Activated CD8-positive, alpha-beta T cell treated with anti-CD3 and anti-CD28 coated beads for 36 hours (primary cell): ENCODE measurements at regions of chr2 and their contacts with region 1.

Region 1: DNA sequence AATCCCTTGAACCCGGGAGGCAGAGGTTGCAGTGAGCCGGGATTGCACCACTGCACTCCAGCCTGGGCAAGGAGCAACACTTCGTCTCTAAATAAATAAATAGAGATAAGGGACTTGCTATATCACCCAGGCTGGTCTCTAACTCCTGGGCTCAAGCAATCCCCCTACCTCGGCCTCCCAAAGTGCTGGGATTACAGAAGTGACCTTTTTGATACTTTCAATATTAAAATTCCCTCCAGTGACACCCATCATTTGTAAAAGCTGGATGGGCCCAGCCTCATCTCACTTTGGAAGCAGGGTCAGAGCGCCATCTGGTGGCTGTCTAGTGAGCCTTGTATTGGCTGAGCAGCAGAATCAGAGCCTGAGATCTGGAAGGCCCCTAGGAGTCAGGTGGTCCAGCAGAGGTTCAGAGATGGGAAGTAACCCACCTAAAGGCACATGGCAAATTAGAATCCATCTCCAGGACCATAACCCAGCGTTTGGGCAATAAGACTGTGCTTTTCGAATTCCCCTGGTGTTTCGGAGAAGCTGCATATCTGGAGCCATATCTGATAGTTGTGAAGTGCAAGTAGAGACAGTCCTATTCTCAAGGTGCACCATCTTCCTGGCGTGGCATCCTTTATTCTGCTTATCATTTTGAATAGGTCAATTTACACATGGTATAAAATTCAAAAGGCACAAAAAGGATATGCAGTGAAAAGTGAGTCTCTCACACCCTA is 18.3 kb upstream of the SLC35F6 start:
- DNase-seq: peak; percentile 91
- ATAC-seq: peak; percentile 79
- H3K4me3 Mint-ChIP-seq: no peak overlapping the region
- H3K27ac Mint-ChIP-seq: no peak overlapping the region
- H3K4me1 Mint-ChIP-seq: peaks cover 3% of the 10 kb centered on the region
- H3K27me3 Mint-ChIP-seq: no peaks in the 10 kb centered on the region
- CTCF ChIP-seq: peak; percentile 86

Region 2: DNA sequence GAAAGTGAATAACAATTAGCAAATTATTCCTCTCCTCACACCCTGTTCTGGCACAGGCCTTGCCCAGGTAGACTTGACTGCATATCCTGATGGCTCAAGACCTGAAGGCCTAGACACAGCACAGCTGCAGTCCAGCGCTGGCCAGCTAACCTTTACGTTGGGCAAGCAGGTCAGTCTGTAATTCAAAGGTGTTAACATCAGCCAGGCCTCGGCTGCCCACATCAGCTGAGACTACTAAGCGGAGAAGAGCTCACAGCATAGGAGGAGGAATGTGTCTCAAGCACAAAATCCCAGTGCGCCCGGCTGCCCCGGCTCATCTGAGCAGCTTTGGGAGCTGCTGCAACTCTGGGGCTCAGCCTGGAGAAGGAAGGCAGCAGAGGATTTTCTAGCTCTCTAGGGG is 234.3 kb before region 1 on chr2:
- CTCF ChIA-PET with region 1: interaction called, 4 read pairs
- POLR2A ChIA-PET with region 1: no interaction called
- intact Hi-C with region 1: loop called (anchors 5 kb)
- DNase-seq: no peak
- ATAC-seq: no peak
- H3K4me3 Mint-ChIP-seq: no peak overlapping the region
- H3K27ac Mint-ChIP-seq: no peak overlapping the region
- H3K4me1 Mint-ChIP-seq: no peaks in the 10 kb centered on the region
- H3K27me3 Mint-ChIP-seq: no peaks in the 10 kb centered on the region
- CTCF ChIP-seq: no peak

Region 3: GRCh38 chr2:26735096-26735495 is 10.7 kb before region 1 on chr2:
- CTCF ChIA-PET with region 1: interaction called, 20 read pairs
- POLR2A ChIA-PET with region 1: no interaction called
- intact Hi-C with region 1: no loop called
- DNase-seq: no peak
- ATAC-seq: no peak
- H3K4me3 Mint-ChIP-seq: no peak overlapping the region
- H3K27ac Mint-ChIP-seq: no peak overlapping the region
- H3K4me1 Mint-ChIP-seq: no peaks in the 10 kb centered on the region
- H3K27me3 Mint-ChIP-seq: peaks cover 2% of the 10 kb centered on the region
- CTCF ChIP-seq: no peak